HCT116 (cell line): ENCODE measurements at regions of chr3 and their contacts with region 1.

Region 1: DNA sequence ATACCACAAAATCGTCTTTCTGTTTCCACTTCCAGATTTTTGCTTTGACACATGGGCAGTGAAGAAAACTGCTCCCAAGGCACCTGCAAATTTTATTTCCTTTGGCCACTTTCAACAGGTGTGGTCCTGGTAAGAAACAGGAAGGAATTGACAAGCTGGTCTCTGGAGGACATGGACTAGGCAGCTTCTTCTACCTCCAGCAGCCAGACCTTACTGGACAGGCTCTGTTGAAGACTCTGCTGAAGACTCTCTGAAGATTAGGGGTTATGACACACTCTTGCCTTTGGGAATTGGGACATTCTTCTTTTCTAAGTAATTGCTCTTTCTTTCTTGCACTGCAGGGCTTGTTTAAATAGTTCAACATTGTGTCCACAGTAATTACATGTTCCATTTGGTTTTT is 147.7 kb upstream of the DCBLD2 start:
- DNase-seq: no peak
- ATAC-seq: no peak
- H3K4me3 ChIP-seq: no peak overlapping the region
- H3K27ac ChIP-seq: no peak overlapping the region
- H3K4me1 ChIP-seq: no peaks in the 10 kb centered on the region
- H3K27me3 ChIP-seq: no peaks in the 10 kb centered on the region
- CTCF ChIP-seq: no peak
- POLR2A ChIP-seq: no peak
- RAD21 ChIP-seq: no peak

Region 2: DNA sequence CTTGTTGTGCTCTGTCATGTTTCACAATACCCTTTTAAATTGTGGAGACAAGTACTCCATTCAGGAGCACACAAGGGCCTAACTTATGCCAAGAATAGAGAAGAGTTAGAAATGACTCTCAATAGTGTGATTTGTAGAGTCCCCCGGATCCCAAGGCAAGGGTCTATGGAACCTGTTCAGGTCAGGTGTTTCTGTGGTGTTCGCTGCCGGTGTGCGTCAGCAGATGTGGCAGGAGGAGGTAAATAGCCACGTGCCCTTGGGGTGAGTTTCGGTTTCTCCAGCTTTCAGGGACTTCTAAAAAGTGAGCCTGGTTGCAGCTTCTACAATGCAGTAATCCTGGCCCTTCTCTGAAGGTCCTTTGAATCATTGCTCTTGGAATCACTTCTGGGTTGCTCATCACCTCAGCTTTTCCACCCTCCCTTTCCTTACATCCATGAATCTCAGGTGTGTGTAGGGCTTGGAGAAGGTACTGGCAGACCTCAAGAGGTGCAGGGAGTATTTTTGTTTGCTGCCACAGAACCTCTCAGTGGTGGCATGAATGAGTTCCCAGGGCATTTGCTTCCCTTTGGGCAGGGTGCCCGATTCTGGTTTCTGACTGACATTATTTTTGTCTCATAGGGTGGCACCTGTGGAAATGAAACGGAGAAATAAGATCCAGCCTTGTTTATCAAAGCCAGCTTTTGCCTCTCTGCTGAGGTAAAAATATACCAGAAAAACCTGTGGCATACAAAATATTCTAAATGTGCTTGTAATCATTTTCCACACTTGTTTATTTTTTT is 278.7 kb before region 1 on chr3:
- CTCF ChIA-PET with region 1: no interaction called
- POLR2A ChIA-PET with region 1: no interaction called
- RAD21 ChIA-PET with region 1: no interaction called
- intact Hi-C with region 1: no loop called
- DNase-seq: no peak
- ATAC-seq: no peak
- H3K4me3 ChIP-seq: no peak overlapping the region
- H3K27ac ChIP-seq: no peak overlapping the region
- H3K4me1 ChIP-seq: no peaks in the 10 kb centered on the region
- H3K27me3 ChIP-seq: no peaks in the 10 kb centered on the region
- CTCF ChIP-seq: no peak
- POLR2A ChIP-seq: no peak
- RAD21 ChIP-seq: no peak

Region 3: DNA sequence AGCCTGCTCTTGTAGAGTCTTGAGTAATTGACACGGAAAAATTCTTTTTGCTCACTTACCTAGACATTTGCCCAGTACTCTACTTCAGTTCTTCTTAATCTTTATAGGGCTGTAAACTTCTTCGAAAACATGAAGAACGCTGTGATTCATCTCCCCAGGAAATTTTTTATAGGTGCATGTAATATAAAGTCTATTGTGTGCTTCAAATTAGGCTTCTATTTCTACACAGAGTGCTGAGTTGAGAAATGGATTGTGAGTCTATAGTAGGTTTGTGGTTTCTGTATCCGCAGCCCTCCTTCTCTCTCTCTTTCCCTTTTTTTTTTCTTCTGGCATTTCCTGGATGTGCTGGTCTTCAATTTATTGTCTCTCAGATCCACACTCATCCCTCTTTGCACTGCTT is 35.7 kb after region 1 on chr3:
- CTCF ChIA-PET with region 1: no interaction called
- POLR2A ChIA-PET with region 1: no interaction called
- RAD21 ChIA-PET with region 1: no interaction called
- intact Hi-C with region 1: loop called (anchors 1 kb)
- DNase-seq: no peak
- ATAC-seq: no peak
- H3K4me3 ChIP-seq: no peak overlapping the region
- H3K27ac ChIP-seq: no peak overlapping the region
- H3K4me1 ChIP-seq: no peaks in the 10 kb centered on the region
- H3K27me3 ChIP-seq: 0 out of 2 replicates have a peak, but pooled peaks cover 3% of the 10 kb centered on the region
- CTCF ChIP-seq: no peak
- POLR2A ChIP-seq: no peak
- RAD21 ChIP-seq: no peak